ENCODE measurements at regions of chr11 and their contacts with region 1.

Region 1: DNA sequence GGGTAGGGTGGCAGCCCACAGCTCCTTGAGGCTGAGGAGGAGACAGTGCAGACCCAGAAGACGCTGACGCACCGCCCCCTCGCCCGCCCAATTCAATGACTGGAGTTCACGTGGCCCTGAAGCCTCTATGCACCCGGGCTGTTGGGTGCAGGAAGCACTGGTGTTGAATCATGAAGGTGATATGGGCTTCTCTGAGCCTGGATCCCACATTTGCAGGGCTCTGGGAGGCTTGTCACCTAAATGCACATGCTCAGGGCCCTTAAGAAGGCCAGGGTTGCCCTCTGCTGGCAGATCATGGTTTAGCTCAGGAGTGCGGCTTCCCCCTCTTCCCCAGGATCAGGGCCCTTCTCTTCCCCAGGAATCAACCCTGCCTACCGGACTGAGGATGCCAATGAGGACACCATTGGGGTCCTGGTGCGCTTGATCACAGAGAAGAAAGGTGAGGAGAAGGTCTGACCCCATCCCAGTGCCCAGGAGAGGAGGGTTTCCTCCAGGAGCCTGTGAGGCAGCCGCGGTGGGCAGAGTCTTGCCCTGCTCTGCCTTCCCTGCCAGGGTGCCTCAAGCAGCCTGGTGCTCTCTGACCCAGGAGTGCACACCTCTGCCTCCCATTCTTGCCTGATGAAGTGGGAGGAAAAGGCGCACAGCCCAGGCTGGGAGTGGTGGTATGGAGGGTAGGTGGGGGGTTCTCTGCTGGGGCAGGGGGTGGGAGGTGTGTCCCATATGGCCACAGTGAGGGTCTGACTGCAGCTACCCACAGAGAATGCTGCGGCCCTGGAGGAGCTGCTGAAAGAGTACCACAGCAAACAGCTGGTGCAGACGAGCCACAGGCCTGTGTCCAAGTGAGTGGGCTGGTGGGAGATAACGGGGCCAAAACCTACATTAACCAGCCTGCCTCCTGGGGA is 17.5 kb downstream of the RELT start:
- DNase-seq: peak; percentile 73
- H3K4me3 ChIP-seq: no peak overlapping the region
- H3K27ac ChIP-seq: peak overlapping the region; percentile 46
- H3K4me1 ChIP-seq: peaks cover 12% of the 10 kb centered on the region
- H3K27me3 ChIP-seq: no peaks in the 10 kb centered on the region
- CTCF ChIP-seq: peak; percentile 78 to 89
- POLR2A ChIP-seq: no peak

Region 2: DNA sequence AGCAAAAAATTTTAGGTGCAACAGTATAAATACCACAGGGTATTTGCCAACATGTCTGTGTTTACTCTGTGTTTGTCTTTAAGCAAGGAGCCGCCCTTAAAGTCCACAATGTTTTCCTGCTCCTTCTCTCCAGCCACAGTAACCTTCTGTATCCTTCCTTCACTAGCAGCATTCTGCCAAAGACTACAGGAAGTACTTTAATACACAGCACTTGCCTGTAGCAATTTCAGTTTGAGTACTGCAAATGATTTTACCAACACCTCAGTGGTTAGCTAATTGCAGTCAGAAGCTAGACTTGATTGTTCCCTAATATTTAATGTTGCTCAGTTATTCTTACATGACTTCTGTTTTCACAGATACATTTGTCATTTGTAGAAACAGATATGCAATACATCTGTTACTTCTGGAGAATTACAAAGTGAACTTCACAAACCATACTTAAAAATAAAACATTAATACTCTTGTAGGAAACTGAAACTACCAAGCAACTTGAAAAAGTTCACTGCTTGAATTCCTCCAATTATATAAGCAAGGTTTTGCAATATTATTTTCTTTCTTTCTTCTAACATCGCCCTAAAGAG is 320.7 kb before region 1 on chr11:
- CTCF ChIA-PET with region 1: no interaction called
- POLR2A ChIA-PET with region 1: no interaction called
- dilution Hi-C with region 1: no loop called
- intact Hi-C with region 1: no loop called
- DNase-seq: peak; percentile 82
- H3K4me3 ChIP-seq: peak overlapping the region in 1 of 3 experiments; percentile 16
- H3K27ac ChIP-seq: no peak overlapping the region
- H3K4me1 ChIP-seq: peaks cover 20% of the 10 kb centered on the region
- H3K27me3 ChIP-seq: no peaks in the 10 kb centered on the region
- CTCF ChIP-seq: no peak
- POLR2A ChIP-seq: peak; percentile 36

Region 3: GRCh38 chr11:73295231-73295995 is 98.3 kb before region 1 on chr11:
- CTCF ChIA-PET with region 1: interaction called, 19 read pairs
- POLR2A ChIA-PET with region 1: no interaction called
- dilution Hi-C with region 1: no loop called
- intact Hi-C with region 1: loop called (anchors 1 kb)
- DNase-seq: peak; percentile 77
- H3K4me3 ChIP-seq: no peak overlapping the region
- H3K27ac ChIP-seq: no peak overlapping the region
- H3K4me1 ChIP-seq: peaks cover 2% of the 10 kb centered on the region
- H3K27me3 ChIP-seq: no peaks in the 10 kb centered on the region
- CTCF ChIP-seq: peak; percentile 95 to 96
- POLR2A ChIP-seq: no peak

Region 4: DNA sequence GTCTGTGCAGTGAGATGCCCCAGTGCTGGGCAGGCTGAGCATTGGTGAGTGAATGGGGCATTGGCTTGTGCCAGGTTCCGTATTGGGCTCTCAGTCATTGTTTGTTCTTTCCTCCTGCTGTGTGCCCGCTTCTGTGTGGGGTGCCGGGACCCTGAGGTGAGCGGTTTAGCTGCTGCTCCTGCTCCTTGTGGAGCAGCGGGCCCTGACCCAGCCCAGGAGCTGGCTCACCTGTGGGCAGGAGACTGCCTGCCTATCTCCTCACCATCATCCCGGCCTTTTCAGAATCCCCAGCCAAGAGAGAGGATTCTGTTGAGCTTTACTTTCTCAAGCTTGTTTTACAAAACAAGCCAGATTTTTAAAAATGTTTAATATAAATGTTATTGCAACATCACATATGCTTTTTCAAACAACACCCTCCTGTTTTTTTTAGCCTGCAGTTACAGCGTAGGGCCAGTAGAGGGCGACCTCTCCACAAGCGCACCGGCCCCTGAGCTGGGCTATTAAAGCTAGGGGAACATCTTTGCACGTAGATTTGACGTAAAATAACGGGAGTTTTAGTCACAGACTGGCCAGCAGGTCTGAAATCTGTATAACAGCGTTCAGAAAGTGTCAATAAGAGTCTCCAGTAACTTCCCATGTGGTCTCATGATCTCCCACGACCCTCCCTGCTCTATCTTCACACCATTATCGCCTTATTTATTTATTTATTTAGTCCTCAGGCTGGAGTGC is 42.7 kb before region 1 on chr11:
- CTCF ChIA-PET with region 1: interaction called, 253 read pairs
- POLR2A ChIA-PET with region 1: no interaction called
- dilution Hi-C with region 1: no loop called
- intact Hi-C with region 1: loop called (anchors 1 kb)
- DNase-seq: peak; percentile 73
- H3K4me3 ChIP-seq: no peak overlapping the region
- H3K27ac ChIP-seq: no peak overlapping the region
- H3K4me1 ChIP-seq: no peaks in the 10 kb centered on the region
- H3K27me3 ChIP-seq: no peaks in the 10 kb centered on the region
- CTCF ChIP-seq: peak; percentile 91 to 97
- POLR2A ChIP-seq: no peak

Region 5: GRCh38 chr11:73376160-73376802 is 17.4 kb before region 1 on chr11 and contains the start of gene RELT:
- CTCF ChIA-PET with region 1: interaction called, 27 read pairs
- POLR2A ChIA-PET with region 1: no interaction called
- dilution Hi-C with region 1: no loop called
- intact Hi-C with region 1: loop called (anchors 1 kb)
- DNase-seq: peak; percentile 93
- H3K4me3 ChIP-seq: peak within 1 kb of the TSS; percentile 47 to 80 (median 49)
- H3K27ac ChIP-seq: peak within 1 kb of the TSS; percentile 75
- H3K4me1 ChIP-seq: peaks cover 2% of the 10 kb centered on the region
- H3K27me3 ChIP-seq: no peaks in the 10 kb centered on the region
- CTCF ChIP-seq: peak; percentile 87 to 95
- POLR2A ChIP-seq: peak; percentile 99
- total RNA-seq, gene RELT: 12.6 and 13.1 TPM in 2 replicates

Region 6: GRCh38 chr11:73445980-73446379 is 52.2 kb after region 1 on chr11:
- CTCF ChIA-PET with region 1: no interaction called
- POLR2A ChIA-PET with region 1: no interaction called
- dilution Hi-C with region 1: no loop called
- intact Hi-C with region 1: no loop called
- DNase-seq: peak; percentile 18
- H3K4me3 ChIP-seq: no peak overlapping the region
- H3K27ac ChIP-seq: no peak overlapping the region
- H3K4me1 ChIP-seq: no peaks in the 10 kb centered on the region
- H3K27me3 ChIP-seq: no peaks in the 10 kb centered on the region
- CTCF ChIP-seq: no peak
- POLR2A ChIP-seq: no peak

Region 7: GRCh38 chr11:73493956-73494598 is 100.3 kb after region 1 on chr11:
- CTCF ChIA-PET with region 1: no interaction called
- POLR2A ChIA-PET with region 1: no interaction called
- dilution Hi-C with region 1: no loop called
- intact Hi-C with region 1: no loop called
- DNase-seq: peak; percentile 27
- H3K4me3 ChIP-seq: no peak overlapping the region
- H3K27ac ChIP-seq: no peak overlapping the region
- H3K4me1 ChIP-seq: no peaks in the 10 kb centered on the region
- H3K27me3 ChIP-seq: no peaks in the 10 kb centered on the region
- CTCF ChIP-seq: no peak
- POLR2A ChIP-seq: no peak